ENCODE measurements at regions of chr22 and their contacts with region 1.

Region 1: GRCh38 chr22:38114484-38115398 is 4.3 kb upstream of the BAIAP2L2 start:
- DNase-seq: peak; percentile 23
- H3K4me3 ChIP-seq: no peak overlapping the region
- CTCF ChIP-seq: peak; percentile 98

Region 2: GRCh38 chr22:38097557-38098409 is 17.0 kb before region 1 on chr22:
- CTCF ChIA-PET with region 1: interaction called, 87 read pairs
- POLR2A ChIA-PET with region 1: no interaction called
- DNase-seq: no peak
- H3K4me3 ChIP-seq: no peak overlapping the region
- CTCF ChIP-seq: peak; percentile 63

Region 3: GRCh38 chr22:38135133-38135751 is 20.5 kb after region 1 on chr22:
- CTCF ChIA-PET with region 1: interaction called, 34 read pairs
- POLR2A ChIA-PET with region 1: no interaction called
- DNase-seq: peak; percentile 41
- H3K4me3 ChIP-seq: no peak overlapping the region
- CTCF ChIP-seq: no peak

Region 4: DNA sequence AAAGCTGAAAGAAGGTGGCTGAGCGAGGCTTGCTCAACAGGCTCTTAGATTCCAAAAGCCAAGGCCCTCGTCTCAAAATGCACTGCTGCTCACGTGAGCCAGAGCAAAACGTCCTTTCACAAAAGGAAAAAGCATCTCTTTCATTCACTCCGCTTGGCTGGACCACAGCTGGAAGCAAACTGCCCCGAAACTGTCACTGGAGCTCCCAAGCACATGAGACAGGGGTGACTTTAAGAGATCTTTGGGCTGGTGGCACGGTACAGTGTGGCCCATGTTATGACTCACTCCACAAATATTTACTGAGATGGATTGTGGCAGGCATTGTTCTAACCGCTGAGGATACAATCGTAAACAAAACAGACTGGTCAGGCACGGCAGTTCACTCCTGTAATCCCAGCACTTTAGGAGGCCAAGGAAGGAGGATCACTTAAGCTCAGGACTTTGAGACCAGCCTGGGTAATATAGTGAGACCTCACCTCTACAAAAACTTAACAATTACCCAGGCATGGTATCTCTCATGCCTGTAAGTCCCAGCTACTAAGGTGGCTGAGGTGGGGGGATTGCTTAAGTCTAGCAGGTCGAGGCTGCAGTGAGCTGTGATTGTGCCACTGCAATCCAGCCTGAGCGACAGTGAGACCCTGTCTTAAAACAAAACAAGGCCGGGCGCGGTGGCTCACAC is 63.3 kb after region 1 on chr22:
- CTCF ChIA-PET with region 1: interaction called, 13 read pairs
- POLR2A ChIA-PET with region 1: no interaction called
- DNase-seq: no peak
- H3K4me3 ChIP-seq: no peak overlapping the region
- CTCF ChIP-seq: no peak

Region 5: DNA sequence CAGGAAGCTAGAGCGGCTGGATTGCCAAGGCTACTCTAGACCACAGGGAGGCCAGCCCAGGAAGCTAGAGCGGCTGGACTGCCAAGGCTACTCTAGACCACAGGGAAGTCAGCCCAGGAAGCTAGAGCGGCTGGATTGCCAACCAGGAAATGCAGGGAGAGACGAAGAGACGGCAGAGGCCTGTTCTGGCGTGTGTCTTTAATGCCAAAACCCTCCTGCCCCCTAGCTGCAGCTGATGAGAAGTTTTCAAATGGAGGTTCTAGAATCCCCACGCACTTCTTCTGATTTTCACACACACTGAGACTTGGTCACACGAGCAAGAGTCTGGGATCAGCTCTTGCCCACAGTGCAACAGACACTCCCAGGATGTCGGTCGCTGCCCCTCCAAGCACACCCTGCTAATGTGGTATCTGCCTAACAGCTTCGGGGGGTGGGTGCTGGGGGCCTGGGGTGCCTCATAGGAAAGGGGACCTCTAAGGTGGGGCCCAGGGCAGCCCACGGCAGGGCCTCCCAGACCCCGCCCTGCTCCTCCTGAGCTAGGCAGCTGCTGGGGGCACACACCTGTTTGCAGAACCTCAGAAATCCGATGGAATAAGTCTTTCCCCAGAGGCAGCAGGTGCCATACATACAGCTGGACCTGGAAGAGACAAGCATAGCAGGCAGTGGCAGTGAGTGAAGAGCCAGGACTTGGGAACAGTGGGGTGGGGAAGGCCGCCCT is 115.5 kb after region 1 on chr22:
- CTCF ChIA-PET with region 1: interaction called, 18 read pairs
- POLR2A ChIA-PET with region 1: no interaction called
- DNase-seq: no peak
- H3K4me3 ChIP-seq: no peak overlapping the region
- CTCF ChIP-seq: peak; percentile 25

Region 6: DNA sequence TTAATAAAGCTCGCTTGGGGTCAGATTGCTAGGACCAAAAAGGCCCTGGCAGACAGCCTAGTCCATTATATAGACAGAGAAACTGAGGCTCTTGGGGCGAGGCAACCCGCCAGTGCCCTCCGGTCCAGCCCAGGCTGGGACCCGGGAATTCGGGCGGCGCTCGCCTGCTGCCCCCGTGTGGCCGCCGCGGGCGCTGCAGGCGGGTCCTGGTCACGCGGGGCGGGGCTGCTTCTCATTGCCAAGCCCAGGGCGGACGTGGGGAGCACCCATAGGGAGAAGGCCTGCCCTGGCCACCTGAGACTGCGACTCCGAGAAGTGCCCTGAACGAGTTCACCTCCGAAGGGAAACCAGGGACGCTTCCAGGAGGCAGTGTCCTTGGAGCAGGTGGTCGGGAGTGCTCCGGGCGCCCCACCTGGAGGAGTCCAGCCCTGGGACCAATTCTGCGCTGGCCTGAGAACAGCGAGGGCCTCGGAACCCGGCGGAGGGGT is 238.4 kb after region 1 on chr22:
- CTCF ChIA-PET with region 1: interaction called, 13 read pairs
- POLR2A ChIA-PET with region 1: no interaction called
- DNase-seq: no peak
- H3K4me3 ChIP-seq: no peak overlapping the region
- CTCF ChIP-seq: peak; percentile 87

Measured in AG04449 (cell line).